Ascending aorta (tissue), 2 donors: ENCODE measurements at regions of chr18 and their contacts with region 1.

Region 1: GRCh38 chr18:76398896-76399612 is 96.0 kb downstream of the ZNF516 start:
- DNase-seq: peak; percentile 29 to 91
- H3K4me3 ChIP-seq: no peak overlapping the region
- H3K27ac ChIP-seq: no peak overlapping the region
- H3K4me1 ChIP-seq: no peaks in the 10 kb centered on the region
- H3K27me3 ChIP-seq: no peaks in the 10 kb centered on the region
- CTCF ChIP-seq: peak; percentile 84 to 98 (median 92)

Region 2: GRCh38 chr18:76450452-76451395 is 51.7 kb after region 1 on chr18:
- intact Hi-C with region 1: no loop called
- DNase-seq: peak in 1 of 2 donors; percentile 68
- H3K4me3 ChIP-seq: peak overlapping the region; percentile 59 to 62
- H3K27ac ChIP-seq: peak overlapping the region; percentile 58 to 73
- H3K4me1 ChIP-seq: peaks cover 1 to 13% of the 10 kb centered on the region in 2 donors
- H3K27me3 ChIP-seq: no peaks in the 10 kb centered on the region
- CTCF ChIP-seq: no peak

Region 3: GRCh38 chr18:76620321-76621170 is 221.5 kb after region 1 on chr18:
- intact Hi-C with region 1: loop called (anchors 1 kb)
- DNase-seq: peak; percentile 40 to 88
- H3K4me3 ChIP-seq: peak overlapping the region; percentile 54 to 67
- H3K27ac ChIP-seq: peak overlapping the region; percentile 58 to 60
- H3K4me1 ChIP-seq: peaks cover 4 to 8% of the 10 kb centered on the region in 2 donors
- H3K27me3 ChIP-seq: no peaks in the 10 kb centered on the region
- CTCF ChIP-seq: peak; percentile 52 to 78 (median 54)

Region 4: DNA sequence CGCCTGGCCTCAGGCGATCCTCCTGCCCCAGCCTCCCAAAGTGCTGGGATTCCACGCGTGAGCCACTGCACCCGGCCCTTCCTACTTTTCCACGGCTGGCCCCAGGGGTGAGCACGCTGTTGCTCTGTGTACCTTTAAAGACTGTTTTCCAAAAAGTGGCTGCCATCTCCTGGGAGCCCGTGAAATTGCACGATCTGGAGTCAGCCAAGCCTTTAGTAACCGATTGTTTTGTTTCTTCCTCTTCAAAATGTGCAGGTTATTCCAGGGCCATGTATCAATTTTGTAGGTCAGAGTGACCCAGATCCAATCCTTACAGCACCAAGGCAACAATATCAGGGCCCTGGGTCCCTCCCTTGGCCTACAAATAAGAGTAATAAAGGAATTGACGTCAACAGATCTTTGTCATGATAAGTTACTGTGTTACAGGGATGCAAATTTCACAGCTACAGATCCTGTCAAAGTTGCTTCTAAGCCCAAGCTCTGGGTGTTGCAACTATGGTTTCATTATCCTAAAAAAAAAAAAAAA is 287.7 kb after region 1 on chr18:
- intact Hi-C with region 1: loop called (anchors 1 kb)
- DNase-seq: peak in 1 of 2 donors; percentile 83
- H3K4me3 ChIP-seq: no peak overlapping the region
- H3K27ac ChIP-seq: no peak overlapping the region
- H3K4me1 ChIP-seq: no peaks in the 10 kb centered on the region
- H3K27me3 ChIP-seq: no peaks in the 10 kb centered on the region
- CTCF ChIP-seq: peak; percentile 52 to 65 (median 55)

Region 5: DNA sequence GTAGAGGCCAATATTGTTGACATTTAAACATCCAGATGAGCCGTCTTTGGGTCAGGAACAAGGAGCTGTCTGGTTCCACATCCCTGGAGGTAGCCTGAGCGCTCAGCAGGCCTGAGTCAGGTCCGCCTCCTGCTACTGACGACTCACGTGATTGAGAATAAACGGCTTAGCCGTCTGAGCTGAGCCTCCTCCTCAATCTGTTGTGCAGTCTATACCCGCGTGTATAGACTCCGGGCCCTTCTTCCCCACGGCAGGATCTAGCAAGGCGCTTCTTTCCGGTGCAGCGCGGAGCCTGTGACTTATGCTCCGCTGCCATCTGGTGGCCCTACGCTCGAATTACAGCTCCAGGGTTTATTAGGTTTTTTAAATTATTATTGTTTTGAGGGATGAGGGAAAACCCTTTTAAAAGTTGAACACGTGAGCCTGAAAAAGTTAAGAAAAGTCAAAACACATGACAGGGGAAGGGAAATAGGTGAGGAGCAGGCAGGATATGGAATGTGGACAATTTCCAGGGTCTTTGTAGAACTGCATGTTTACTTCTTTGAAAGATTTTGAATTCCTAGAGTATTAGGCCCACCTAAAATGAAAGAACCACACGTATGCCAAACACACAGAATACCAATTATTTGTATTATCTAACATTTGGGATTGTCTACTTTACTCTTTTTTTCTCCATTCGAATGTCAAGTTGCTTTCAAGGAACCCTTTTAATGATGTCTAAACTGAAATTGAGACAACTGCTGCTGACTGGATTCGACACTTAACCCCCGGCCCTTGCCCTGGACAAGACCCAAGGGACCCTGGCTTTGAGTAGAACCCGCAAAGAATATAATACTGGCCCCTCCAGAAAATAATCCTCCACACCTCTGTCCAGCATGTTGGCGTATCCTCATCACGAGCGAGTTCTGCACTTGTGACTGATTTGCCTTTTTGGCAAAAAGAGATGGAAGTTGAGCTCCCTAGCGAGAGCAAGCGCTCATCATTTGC is 310.9 kb after region 1 on chr18:
- intact Hi-C with region 1: loop called (anchors 1 kb)
- DNase-seq: peak in 1 of 2 donors; percentile 81
- H3K4me3 ChIP-seq: no peak overlapping the region
- H3K27ac ChIP-seq: no peak overlapping the region
- H3K4me1 ChIP-seq: no peaks in the 10 kb centered on the region
- H3K27me3 ChIP-seq: no peaks in the 10 kb centered on the region
- CTCF ChIP-seq: peak; percentile 80 to 95 (median 88)